Psoas muscle (tissue), 8 donors: ENCODE measurements at regions of chr12 and their contacts with region 1.

Region 1: DNA sequence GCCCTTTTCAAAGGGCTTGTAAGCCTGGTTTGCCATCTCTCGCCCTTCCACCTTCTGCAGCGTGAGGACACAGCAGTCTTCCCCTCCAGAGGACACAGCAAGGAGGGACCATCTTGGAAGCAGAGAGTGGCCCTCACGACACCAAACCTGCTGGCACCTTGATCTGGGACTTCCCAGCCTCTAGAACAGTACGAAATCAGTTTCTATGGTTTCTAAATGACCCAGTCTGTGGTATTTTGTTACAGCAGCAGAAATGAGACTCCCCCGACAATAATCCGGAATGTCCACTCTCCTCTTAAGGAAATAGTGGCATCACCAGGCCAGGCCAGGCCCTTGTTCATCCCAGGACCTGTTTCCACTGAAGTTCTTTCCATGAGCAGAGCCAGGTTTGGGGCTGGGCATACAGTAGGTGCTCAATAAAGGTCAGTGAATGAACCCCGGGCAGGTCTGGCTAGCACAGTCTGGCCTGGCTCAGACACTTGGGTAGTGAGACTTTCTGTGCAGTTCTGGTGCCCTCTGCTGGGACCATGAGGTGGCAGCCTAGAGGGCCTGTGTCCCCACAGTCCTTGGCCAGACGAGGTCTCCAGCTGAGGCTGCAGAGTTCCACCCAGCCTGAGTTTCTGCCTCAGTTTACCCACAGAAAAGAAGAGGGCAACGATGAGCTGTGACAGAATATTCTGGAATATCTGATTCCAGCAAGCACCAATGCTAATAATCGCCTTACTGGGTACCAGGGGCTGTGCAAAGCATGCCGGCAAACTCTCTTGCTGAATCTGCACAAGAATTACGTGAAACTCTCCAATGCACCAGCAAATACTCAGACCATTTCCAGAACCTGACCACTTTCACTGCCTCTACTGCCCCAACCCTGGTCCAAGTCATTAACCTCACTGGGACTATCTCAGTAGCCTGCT is 14.0 kb downstream of the ABCB9 start:
- DNase-seq: peak; percentile 73 to 86
- ATAC-seq: peak; percentile 93 to 98 (median 96)
- H3K4me3 ChIP-seq: no peak overlapping the region
- H3K27ac ChIP-seq: no peak overlapping the region
- H3K4me1 ChIP-seq: no peaks in the 10 kb centered on the region
- H3K27me3 ChIP-seq: no peaks in the 10 kb centered on the region
- CTCF ChIP-seq: peak; percentile 90

Region 2: GRCh38 chr12:122356192-122356635 is 596.0 kb before region 1 on chr12:
- intact Hi-C with region 1: no loop called
- DNase-seq: no peak
- ATAC-seq: peak; percentile 63 to 77 (median 72)
- H3K4me3 ChIP-seq: no peak overlapping the region
- H3K27ac ChIP-seq: peak overlapping the region; percentile 71
- H3K4me1 ChIP-seq: peaks cover 9% of the 10 kb centered on the region
- H3K27me3 ChIP-seq: no peaks in the 10 kb centered on the region
- CTCF ChIP-seq: peak; percentile 72

Region 3: DNA sequence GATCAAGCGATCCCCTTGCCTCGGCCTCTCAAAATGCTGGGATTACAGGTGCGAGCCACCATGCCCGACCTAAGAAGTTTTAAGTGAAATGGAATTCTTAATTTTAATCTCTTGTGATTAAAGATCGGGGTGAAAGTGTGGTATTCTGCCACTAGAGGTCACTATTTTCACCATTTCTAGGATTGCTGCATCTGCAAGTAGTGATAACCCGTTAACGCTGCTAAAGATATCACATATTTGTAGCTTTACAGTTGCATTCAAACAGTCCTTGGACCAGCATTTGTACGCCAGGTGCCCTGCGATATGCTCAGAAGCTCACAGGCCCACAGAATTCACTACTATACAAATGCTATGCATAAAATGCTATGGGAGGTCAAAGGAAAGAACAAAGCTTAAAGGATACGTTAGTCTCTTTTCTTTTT is 158.5 kb before region 1 on chr12:
- intact Hi-C with region 1: loop called in 1 of 2 experiments (anchors 1 kb)
- DNase-seq: no peak
- ATAC-seq: peak in 3 of 4 donors; percentile 35 to 77 (median 55)
- H3K4me3 ChIP-seq: no peak overlapping the region
- H3K27ac ChIP-seq: no peak overlapping the region
- H3K4me1 ChIP-seq: no peaks in the 10 kb centered on the region
- H3K27me3 ChIP-seq: no peaks in the 10 kb centered on the region
- CTCF ChIP-seq: peak; percentile 72

Region 4: GRCh38 chr12:122860346-122861090 is 91.7 kb before region 1 on chr12:
- intact Hi-C with region 1: loop called (anchors 1 to 2 kb)
- DNase-seq: peak; percentile 88 to 93
- ATAC-seq: peak; percentile 84 to 94 (median 86)
- H3K4me3 ChIP-seq: no peak overlapping the region
- H3K27ac ChIP-seq: peak overlapping the region; percentile 14
- H3K4me1 ChIP-seq: peaks cover 5% of the 10 kb centered on the region
- H3K27me3 ChIP-seq: no peaks in the 10 kb centered on the region
- CTCF ChIP-seq: peak; percentile 87

Region 5: DNA sequence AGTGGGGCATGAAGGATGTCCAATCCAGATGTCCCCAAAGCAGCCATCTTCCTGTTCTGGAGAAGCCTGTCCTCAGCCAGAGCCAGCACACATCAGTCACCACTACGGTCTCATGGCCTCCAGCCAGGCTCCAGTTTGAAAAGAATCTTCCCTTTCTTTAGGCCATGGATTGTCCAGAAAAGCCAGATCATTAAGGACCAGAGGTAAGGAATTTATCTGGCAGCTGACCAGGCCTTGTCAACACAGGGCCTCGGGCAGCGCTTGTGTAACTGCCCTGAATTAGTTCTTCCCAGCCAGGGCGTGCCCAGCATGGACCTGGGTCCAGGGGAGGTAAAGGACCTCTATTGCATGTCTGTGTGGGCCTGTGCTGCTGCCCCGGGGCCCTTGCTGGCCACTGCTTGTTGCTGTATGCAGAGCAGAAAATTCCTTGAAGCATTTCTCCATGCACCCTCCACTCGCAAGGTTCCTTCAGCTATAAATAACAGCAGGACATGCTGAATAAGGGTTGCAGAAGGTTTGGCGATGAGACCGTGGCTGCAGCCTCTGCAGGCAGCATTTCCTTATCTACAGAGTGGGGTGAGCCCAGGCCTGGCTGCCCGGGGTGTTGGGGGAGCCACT is 34.6 kb before region 1 on chr12:
- intact Hi-C with region 1: no loop called
- DNase-seq: peak in 1 of 2 donors; percentile 33
- ATAC-seq: peak; percentile 71 to 89 (median 85)
- H3K4me3 ChIP-seq: peak overlapping the region; percentile 38
- H3K27ac ChIP-seq: peak overlapping the region; percentile 76
- H3K4me1 ChIP-seq: peaks cover 30% of the 10 kb centered on the region
- H3K27me3 ChIP-seq: no peaks in the 10 kb centered on the region
- CTCF ChIP-seq: no peak

Region 6: GRCh38 chr12:122984612-122985337 is 32.5 kb after region 1 on chr12:
- intact Hi-C with region 1: no loop called
- DNase-seq: peak; percentile 47 to 72
- ATAC-seq: peak in 1 of 4 donors; percentile 10
- H3K4me3 ChIP-seq: peak overlapping the region; percentile 7
- H3K27ac ChIP-seq: peak overlapping the region; percentile 46
- H3K4me1 ChIP-seq: peaks cover 38% of the 10 kb centered on the region
- H3K27me3 ChIP-seq: no peaks in the 10 kb centered on the region
- CTCF ChIP-seq: no peak